SK-N-SH (cell line): ENCODE measurements at regions of chr19 and their contacts with region 1.

Region 1: DNA sequence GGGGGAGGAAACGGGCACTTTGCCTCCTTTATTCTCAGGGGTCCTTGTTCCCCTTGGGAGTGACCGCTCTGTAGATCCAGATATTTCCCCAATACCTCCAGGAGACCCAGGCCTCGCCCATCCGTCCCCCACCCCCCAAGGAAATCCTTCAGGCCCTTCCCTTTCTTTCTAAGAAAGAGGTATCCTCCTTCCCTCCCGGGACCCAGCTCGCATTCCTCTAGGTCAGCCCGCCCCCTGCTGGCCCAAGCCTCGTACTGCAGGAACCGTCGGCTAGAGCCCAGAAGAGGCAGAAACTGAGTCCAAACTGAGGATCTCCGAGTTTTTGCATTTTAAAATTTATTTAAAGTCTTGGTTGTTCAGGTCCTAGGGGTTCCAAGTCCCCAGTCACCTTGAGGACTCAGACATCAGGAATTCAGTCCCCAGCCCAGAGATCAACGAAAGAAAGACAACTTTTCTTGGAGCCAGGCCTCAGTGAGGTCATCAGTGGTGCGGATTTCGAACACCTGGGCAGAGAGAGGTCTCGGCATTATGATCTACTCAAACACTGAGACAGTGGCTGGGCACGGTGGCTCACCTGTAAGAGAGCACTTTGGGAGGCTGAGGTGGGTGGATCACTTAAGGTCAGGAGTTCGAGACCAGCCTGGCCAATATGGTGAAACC is 7.5 kb upstream of the LRFN1 start:
- DNase-seq: peak; percentile 84
- H3K4me3 ChIP-seq: no peak overlapping the region; a peak in 1 of 4 replicates
- H3K27ac ChIP-seq: no peak overlapping the region
- H3K4me1 ChIP-seq: no peaks in the 10 kb centered on the region
- H3K27me3 ChIP-seq: no peaks in the 10 kb centered on the region
- CTCF ChIP-seq: peak; percentile 97
- EP300 ChIP-seq: no peak
- RAD21 ChIP-seq: peak; percentile 95

Region 2: DNA sequence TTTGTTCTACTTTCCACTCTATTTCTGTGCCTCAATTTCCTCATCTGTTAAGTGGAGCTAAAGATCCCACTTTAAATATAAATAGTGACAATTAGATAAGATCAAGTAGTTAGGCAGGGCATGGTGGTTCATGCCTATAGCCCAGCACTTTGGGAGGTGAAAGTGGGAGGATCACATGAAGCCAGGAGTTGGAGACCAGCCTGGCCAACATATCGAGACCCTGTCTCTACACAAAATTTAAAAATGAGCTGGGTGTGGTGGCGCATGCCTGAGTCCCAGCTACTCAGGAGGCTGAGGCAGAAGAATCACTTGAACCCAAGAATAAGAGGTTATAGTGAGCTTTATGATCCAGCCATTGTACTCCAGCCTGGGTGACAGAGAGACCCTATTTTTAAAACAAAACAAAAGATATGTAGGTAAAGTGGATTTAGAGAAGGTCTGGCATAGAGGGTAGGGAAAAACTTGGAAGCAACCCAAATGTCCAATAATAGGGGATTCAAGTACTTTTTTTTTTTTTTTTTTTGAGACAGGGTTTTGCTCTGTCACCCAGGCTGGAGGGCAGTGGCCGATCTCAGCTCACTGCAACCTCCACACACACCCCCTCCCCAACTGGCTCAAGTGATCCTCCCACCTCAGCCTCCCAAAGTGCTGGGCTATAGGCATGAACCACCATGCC is 208.5 kb before region 1 on chr19:
- CTCF ChIA-PET with region 1: interaction called, 56 read pairs
- POLR2A ChIA-PET with region 1: interaction called, 3 read pairs
- DNase-seq: no peak
- H3K4me3 ChIP-seq: no peak overlapping the region
- H3K27ac ChIP-seq: no peak overlapping the region
- H3K4me1 ChIP-seq: no peaks in the 10 kb centered on the region
- H3K27me3 ChIP-seq: no peaks in the 10 kb centered on the region
- CTCF ChIP-seq: no peak
- EP300 ChIP-seq: no peak
- RAD21 ChIP-seq: no peak

Region 3: GRCh38 chr19:39166571-39167391 is 161.4 kb before region 1 on chr19:
- CTCF ChIA-PET with region 1: no interaction called
- POLR2A ChIA-PET with region 1: no interaction called
- DNase-seq: peak; percentile 92
- H3K4me3 ChIP-seq: no peak overlapping the region
- H3K27ac ChIP-seq: peak overlapping the region in 1 of 2 experiments; percentile 69; a peak in 2 of 4 replicates
- H3K4me1 ChIP-seq: peaks cover 0 to 37% of the 10 kb centered on the region in 2 experiments; a peak in 1 of 4 replicates
- H3K27me3 ChIP-seq: no peaks in the 10 kb centered on the region
- CTCF ChIP-seq: no peak
- EP300 ChIP-seq: no peak; a peak in 1 of 4 replicates
- RAD21 ChIP-seq: peak; percentile 28; the same call in 1 of the 2 replicates